Motor neuron (in vitro differentiated cells): ENCODE measurements at regions of chr22 and their contacts with region 1.

Region 1: DNA sequence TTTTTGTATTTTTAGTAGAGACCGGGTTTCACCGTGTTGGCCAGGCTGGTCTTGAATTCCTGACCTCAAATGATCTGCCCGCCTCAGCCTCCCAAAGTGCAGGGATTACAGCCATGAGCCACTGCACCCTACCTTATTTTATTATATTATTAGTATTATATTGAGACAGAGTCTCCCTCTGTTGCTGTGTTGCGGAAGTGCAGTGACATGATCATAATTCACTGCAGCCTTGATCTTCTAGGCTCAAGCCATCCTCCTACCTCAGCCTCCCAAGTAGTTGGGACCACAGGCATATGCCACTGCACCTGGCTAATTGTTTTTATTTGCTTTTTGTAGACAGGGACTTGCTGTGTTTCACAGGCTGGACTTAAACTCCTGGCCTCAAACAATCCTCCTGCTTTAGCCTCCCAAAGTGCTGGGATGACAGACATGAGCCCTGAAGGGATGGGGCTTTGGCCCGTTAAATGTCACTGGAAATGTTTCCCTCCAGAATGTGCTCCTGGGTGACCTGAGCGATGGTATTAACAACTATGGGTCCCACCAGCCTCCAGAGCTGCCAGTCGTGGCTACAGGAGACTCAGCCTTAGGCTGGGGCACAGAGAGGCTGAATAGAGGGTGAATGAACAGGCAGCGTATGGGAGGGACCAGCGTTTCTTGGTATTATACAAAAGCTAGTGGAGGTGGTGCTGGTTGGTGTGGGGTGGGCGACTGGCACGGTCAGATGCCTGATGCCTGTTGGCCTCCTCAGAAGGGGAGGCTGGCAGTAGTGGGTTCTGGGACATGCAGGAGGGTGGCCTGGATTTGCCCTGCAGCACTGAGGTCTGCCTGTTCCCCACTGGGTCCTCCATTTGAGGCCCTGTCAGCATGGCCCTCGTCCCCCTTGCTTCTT is 7.3 kb downstream of the TANGO2 start:
- ATAC-seq: peak in 3 of 8 experiments; percentile 18 to 61 (median 37)
- H3K4me3 ChIP-seq: no peak overlapping the region
- H3K27ac ChIP-seq: peak overlapping the region in 1 of 2 donors; percentile 41
- H3K4me1 ChIP-seq: peaks cover 5 to 9% of the 10 kb centered on the region in 2 donors

Region 2: GRCh38 chr22:19717691-19718455 is 310.3 kb before region 1 on chr22:
- in situ Hi-C with region 1: no loop called
- ATAC-seq: peak; percentile 62 to 87 (median 68)
- H3K4me3 ChIP-seq: peak overlapping the region; percentile 32 to 52 (median 33)
- H3K27ac ChIP-seq: no peak overlapping the region
- H3K4me1 ChIP-seq: peaks cover 38 to 40% of the 10 kb centered on the region in 2 donors

Region 3: DNA sequence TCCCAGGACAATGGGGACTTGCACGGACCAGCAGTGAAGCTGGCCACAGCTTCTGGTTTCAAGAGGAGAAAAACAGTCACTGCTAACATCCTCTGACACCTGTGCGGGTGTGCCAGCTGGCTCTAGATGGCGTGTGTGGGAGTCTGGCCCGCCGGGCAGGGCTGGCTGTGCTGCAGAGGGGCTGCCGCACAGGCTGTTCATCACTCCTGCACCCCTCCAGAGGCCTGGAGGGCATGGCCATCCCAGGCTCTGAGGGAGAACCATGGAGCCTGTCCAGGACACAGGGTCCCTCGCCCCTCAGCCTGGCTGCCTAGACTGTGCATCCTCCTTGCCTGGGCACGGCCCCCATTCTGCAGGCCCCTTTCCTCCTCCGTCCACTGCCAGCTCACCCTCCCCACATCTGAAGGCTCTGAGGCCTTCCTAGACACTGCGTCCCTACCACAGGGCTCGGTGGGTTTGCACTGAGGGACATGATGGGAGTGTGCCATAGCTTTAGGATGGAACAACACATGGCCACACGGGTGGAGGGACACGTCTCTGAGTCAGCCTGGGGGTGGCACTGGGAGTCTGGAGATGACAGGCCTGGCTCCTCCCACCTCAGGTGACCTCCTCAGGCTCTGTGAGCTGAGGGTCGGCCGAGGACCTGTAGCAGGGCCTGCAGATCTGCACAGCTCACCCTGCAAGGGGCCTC is 131.4 kb before region 1 on chr22:
- in situ Hi-C with region 1: no loop called
- ATAC-seq: peak in 6 of 8 experiments; percentile 9 to 68 (median 34)
- H3K4me3 ChIP-seq: no peak overlapping the region
- H3K27ac ChIP-seq: no peak overlapping the region
- H3K4me1 ChIP-seq: peaks cover 15 to 21% of the 10 kb centered on the region in 2 donors

Region 4: GRCh38 chr22:20130739-20131596 is 102.8 kb after region 1 on chr22:
- in situ Hi-C with region 1: loop called in 1 of 9 experiments (anchors 25 kb)
- ATAC-seq: peak; percentile 55 to 82 (median 74)
- H3K4me3 ChIP-seq: peak overlapping the region; percentile 90 to 100 (median 96)
- H3K27ac ChIP-seq: peak overlapping the region; percentile 89 to 94
- H3K4me1 ChIP-seq: peaks cover 19% of the 10 kb centered on the region in 2 donors